Dorsolateral prefrontal cortex (tissue), 120 donors: ENCODE measurements at regions of chr4 and their contacts with region 1.

Region 1: DNA sequence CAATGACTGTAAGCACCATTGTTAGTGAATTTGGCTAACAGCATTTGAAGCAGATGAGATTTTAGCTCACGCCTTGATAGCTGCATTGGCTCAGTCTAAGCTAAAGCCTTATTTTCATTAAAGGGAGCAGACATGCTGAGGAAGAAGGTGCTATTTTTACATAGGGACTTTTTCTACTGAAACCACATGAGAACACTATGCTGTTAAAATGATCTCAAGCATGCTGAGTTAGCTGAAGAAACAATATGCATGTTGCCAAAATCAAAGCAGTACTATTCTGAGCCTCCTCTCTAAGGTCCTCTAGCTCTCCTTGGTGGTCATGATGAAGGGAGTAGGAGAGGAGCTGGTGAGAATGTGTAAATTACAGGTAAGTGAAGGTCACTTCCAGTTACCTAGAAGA is 134.4 kb upstream of the JADE1 start:
- DNase-seq: no peak
- H3K4me3 ChIP-seq: peak overlapping the region in 1 of 59 donors; percentile 35
- H3K27ac ChIP-seq: peak overlapping the region in 34 of 59 donors; percentile 6 to 79 (median 50)
- H3K27me3 ChIP-seq: no peaks in the 10 kb centered on the region
- CTCF ChIP-seq: peak in 13 of 56 donors; percentile 10 to 35 (median 15)

Region 2: GRCh38 chr4:128379860-128380259 is 295.2 kb before region 1 on chr4:
- intact Hi-C with region 1: loop called in 1 of 2 experiments (anchors 10 kb)
- DNase-seq: no peak
- H3K4me3 ChIP-seq: no peak overlapping the region
- H3K27ac ChIP-seq: no peak overlapping the region
- H3K27me3 ChIP-seq: no peaks in the 10 kb centered on the region
- CTCF ChIP-seq: peak in 47 of 56 donors; percentile 15 to 52 (median 36)

Region 3: GRCh38 chr4:128600996-128601871 is 73.8 kb before region 1 on chr4:
- intact Hi-C with region 1: loop called in 1 of 2 experiments (anchors 5 kb)
- DNase-seq: peak in 7 of 10 donors; percentile 23 to 45 (median 34)
- H3K4me3 ChIP-seq: peak overlapping the region in 12 of 59 donors; percentile 0 to 41 (median 8)
- H3K27ac ChIP-seq: peak overlapping the region in 48 of 59 donors; percentile 0 to 88 (median 59)
- H3K27me3 ChIP-seq: peaks cover 0 to 6% (median 0%) of the 10 kb centered on the region in 45 donors
- CTCF ChIP-seq: no peak

Region 4: GRCh38 chr4:128718768-128719167 is 43.7 kb after region 1 on chr4:
- intact Hi-C with region 1: no loop called
- DNase-seq: no peak
- H3K4me3 ChIP-seq: no peak overlapping the region
- H3K27ac ChIP-seq: no peak overlapping the region
- H3K27me3 ChIP-seq: peaks cover 0 to 4% (median 0%) of the 10 kb centered on the region in 45 donors
- CTCF ChIP-seq: no peak